Activated CD8-positive, alpha-beta T cell treated with anti-CD3 and anti-CD28 coated beads for 36 hours (primary cell): ENCODE measurements at regions of chr3 and their contacts with region 1.

Region 1: DNA sequence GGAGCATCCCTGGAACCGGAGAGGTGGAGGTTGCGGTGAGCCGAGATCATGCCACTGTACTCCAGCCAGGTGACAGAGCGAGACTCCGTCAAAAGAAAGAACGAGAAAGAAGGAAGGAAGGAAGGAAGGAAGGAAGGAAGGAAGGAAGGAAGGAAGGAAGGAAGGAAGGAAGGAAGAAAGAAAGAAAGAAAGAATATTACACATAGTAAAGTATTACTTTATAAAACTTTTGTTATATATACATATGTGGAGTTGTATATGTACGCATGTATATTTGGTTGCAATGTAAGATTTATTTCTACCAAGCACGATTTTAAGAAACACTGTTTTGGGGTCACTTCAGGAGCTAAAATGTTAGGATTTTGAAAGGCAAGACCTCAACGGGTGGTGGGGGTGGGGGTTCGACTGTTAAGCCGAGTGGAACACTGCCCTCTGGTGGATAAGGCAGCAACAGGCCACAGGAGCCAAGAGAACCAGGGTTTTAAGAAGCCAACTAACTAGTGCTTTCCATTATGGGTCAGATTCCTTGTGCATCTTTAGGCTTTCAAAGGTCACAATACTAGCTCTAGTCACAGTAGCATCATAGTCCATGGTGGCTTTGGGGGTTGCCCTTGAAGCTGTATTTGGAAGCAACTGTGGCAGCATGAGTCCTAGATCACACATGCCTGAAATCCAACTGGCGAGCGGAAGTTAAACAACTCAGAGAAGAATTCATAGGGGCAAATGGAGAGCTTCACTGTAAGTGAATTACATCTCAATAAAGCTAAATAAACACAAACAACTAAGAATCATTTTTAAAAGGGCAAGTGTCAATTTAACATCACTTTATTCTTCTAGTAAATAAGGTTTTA is 22.5 kb downstream of the GLB1 start:
- DNase-seq: peak; percentile 85
- ATAC-seq: peak; percentile 87
- H3K4me3 Mint-ChIP-seq: no peak overlapping the region
- H3K27ac Mint-ChIP-seq: no peak overlapping the region
- H3K4me1 Mint-ChIP-seq: peaks cover 11% of the 10 kb centered on the region
- H3K27me3 Mint-ChIP-seq: no peaks in the 10 kb centered on the region
- CTCF ChIP-seq: peak; percentile 78

Region 2: GRCh38 chr3:32992322-32992692 is 82.1 kb before region 1 on chr3:
- CTCF ChIA-PET with region 1: interaction called, 15 read pairs
- POLR2A ChIA-PET with region 1: no interaction called
- intact Hi-C with region 1: no loop called
- DNase-seq: no peak
- ATAC-seq: peak; percentile 12
- H3K4me3 Mint-ChIP-seq: peak overlapping the region; percentile 42
- H3K27ac Mint-ChIP-seq: peak overlapping the region; percentile 92
- H3K4me1 Mint-ChIP-seq: peaks cover 56% of the 10 kb centered on the region
- H3K27me3 Mint-ChIP-seq: no peaks in the 10 kb centered on the region
- CTCF ChIP-seq: no peak

Region 3: GRCh38 chr3:33030802-33031201 is 43.6 kb before region 1 on chr3:
- CTCF ChIA-PET with region 1: interaction called, 48 read pairs
- POLR2A ChIA-PET with region 1: interaction called, 4 read pairs
- intact Hi-C with region 1: loop called (anchors 5 kb)
- DNase-seq: peak; percentile 84
- ATAC-seq: peak; percentile 92
- H3K4me3 Mint-ChIP-seq: no peak overlapping the region
- H3K27ac Mint-ChIP-seq: no peak overlapping the region
- H3K4me1 Mint-ChIP-seq: peaks cover 23% of the 10 kb centered on the region
- H3K27me3 Mint-ChIP-seq: no peaks in the 10 kb centered on the region
- CTCF ChIP-seq: peak; percentile 36

Region 4: GRCh38 chr3:33057320-33058298 is 16.8 kb before region 1 on chr3:
- CTCF ChIA-PET with region 1: interaction called, 54 read pairs
- POLR2A ChIA-PET with region 1: interaction called, 3 read pairs
- intact Hi-C with region 1: no loop called
- DNase-seq: no peak
- ATAC-seq: no peak
- H3K4me3 Mint-ChIP-seq: no peak overlapping the region
- H3K27ac Mint-ChIP-seq: no peak overlapping the region
- H3K4me1 Mint-ChIP-seq: peaks cover 50% of the 10 kb centered on the region
- H3K27me3 Mint-ChIP-seq: no peaks in the 10 kb centered on the region
- CTCF ChIP-seq: no peak

Region 5: GRCh38 chr3:33089515-33089914 is 15.1 kb after region 1 on chr3:
- CTCF ChIA-PET with region 1: interaction called, 36 read pairs
- POLR2A ChIA-PET with region 1: interaction called, 4 read pairs
- intact Hi-C with region 1: no loop called
- DNase-seq: peak; percentile 44
- ATAC-seq: peak; percentile 72
- H3K4me3 Mint-ChIP-seq: peak overlapping the region; percentile 11
- H3K27ac Mint-ChIP-seq: peak overlapping the region; percentile 0
- H3K4me1 Mint-ChIP-seq: peaks cover 73% of the 10 kb centered on the region
- H3K27me3 Mint-ChIP-seq: no peaks in the 10 kb centered on the region
- CTCF ChIP-seq: no peak

Region 6: DNA sequence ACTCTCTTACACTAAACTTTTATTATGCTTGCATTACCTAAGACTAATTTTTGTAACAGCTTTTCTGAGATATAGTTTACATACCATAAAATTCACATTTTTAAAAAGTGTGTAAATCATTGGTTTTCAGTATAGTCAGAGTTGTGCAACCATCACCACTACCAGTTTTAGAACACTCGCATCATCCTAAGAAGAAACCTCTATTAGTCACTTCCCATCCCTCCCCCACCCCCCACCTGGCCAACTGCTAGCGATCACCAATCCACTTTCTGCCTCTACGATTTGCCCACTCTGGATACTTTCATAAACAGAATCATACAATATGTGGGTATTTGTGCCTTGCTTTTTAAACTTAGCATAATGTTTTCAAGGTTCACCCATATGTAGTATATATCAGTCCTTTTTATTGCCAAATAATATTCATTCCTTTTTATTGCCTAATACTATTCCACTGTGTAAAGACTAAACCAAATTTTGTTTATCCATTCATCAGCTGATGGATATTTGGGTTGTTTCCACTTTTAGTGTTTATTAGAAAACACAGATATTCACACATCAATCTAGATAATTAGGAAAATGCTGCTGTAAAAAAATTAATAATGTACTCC is 342.7 kb after region 1 on chr3:
- CTCF ChIA-PET with region 1: no interaction called
- POLR2A ChIA-PET with region 1: no interaction called
- intact Hi-C with region 1: no loop called
- DNase-seq: peak; percentile 55
- ATAC-seq: peak; percentile 74
- H3K4me3 Mint-ChIP-seq: no peak overlapping the region
- H3K27ac Mint-ChIP-seq: peak overlapping the region; percentile 71
- H3K4me1 Mint-ChIP-seq: peaks cover 24% of the 10 kb centered on the region
- H3K27me3 Mint-ChIP-seq: no peaks in the 10 kb centered on the region
- CTCF ChIP-seq: no peak